Aorta (tissue), 5 donors: ENCODE measurements at regions of chr15 and their contacts with region 1.

Region 1: DNA sequence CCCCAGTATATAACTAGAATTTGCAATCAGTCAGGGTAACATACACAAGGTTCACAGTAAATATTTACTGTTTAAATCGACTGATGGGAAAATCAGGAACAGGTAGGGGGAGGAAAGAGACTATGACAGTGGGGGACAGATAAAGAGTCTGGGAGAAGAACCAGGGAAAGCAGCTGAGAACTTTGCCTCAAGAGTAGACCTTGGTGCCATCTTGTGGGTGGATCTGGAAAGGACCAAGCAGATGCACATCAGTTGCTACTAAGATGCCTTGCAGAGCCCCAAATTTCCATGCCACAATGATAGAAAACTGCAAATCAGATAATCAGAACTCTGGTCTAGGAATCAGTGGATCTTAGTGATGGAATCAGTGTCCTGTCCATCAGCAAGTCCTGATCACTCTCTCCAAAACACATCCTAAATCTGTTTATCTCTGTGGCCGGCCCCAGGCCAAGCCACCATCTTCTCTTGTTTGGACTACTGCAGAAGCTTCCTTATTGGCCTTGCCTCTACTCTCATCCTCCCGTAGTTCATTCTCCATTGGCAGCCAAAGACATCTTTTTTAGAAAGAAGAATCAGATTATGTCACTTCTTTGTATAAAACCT is 62.7 kb downstream of the PDE8A start:
- DNase-seq: no peak
- ATAC-seq: peak; percentile 78
- H3K4me3 ChIP-seq: no peak overlapping the region
- H3K27ac ChIP-seq: no peak overlapping the region
- H3K4me1 ChIP-seq: no peaks in the 10 kb centered on the region
- H3K27me3 ChIP-seq: no peaks in the 10 kb centered on the region

Region 2: GRCh38 chr15:84588053-84588874 is 456.1 kb before region 1 on chr15:
- intact Hi-C with region 1: loop called (anchors 5 to 10 kb)
- DNase-seq: peak; percentile 90 to 95
- ATAC-seq: peak; percentile 99
- H3K4me3 ChIP-seq: peak overlapping the region in 1 of 2 donors; percentile 12
- H3K27ac ChIP-seq: no peak overlapping the region
- H3K4me1 ChIP-seq: no peaks in the 10 kb centered on the region
- H3K27me3 ChIP-seq: no peaks in the 10 kb centered on the region

Region 3: GRCh38 chr15:84600851-84601838 is 443.2 kb before region 1 on chr15 and contains the start of gene ZSCAN2:
- intact Hi-C with region 1: loop called in 1 of 2 experiments (anchors 10 kb)
- DNase-seq: peak; percentile 98
- ATAC-seq: peak; percentile 98
- H3K4me3 ChIP-seq: peak within 1 kb of the TSS; percentile 79 to 91
- H3K27ac ChIP-seq: peak within 1 kb of the TSS in 1 of 2 donors; percentile 18
- H3K4me1 ChIP-seq: no peaks in the 10 kb centered on the region
- H3K27me3 ChIP-seq: no peaks in the 10 kb centered on the region
- total RNA-seq, gene ZSCAN2: 4.1 to 6.7 TPM

Region 4: DNA sequence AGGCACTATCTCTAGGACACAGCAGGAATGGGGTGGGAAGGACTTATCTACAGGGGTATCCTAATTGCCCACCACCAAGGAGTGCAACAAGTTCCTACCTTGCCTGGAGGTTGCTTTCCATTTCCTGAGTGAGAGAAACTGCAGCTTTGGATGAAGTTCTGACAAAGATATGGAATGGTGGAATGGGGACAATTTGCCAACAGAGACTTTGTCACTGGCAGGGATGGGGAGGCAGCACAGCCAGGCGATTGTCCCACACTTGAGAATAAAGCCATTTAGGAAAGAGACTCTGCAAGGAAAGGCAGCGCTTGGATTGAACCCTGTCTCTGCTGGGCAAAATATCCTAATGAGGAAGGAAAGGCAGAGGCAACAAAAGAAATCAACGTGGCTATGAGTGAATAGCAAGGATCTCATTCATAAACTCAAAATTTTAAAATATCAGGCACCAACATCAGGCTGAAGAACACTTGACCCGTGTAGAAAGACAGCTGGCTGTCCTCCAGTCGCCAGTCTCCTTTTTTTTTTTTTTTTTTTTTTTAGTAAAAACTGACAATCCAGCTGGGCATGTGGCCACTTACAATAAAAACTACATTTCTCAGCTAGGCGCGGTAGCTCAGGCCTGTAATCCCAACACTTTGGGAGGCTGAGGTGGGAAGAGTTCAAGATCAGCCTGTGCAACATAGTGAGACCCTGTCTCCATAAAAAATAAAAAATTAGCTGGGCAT is 94.3 kb before region 1 on chr15:
- intact Hi-C with region 1: loop called (anchors 2 to 5 kb)
- DNase-seq: no peak
- ATAC-seq: no peak
- H3K4me3 ChIP-seq: no peak overlapping the region
- H3K27ac ChIP-seq: peak overlapping the region in 1 of 2 donors; percentile 70
- H3K4me1 ChIP-seq: peaks cover 0 to 2% of the 10 kb centered on the region in 2 donors
- H3K27me3 ChIP-seq: no peaks in the 10 kb centered on the region

Region 5: GRCh38 chr15:84955089-84955848 is 89.1 kb before region 1 on chr15:
- intact Hi-C with region 1: loop called (anchors 2 to 5 kb)
- DNase-seq: peak; percentile 81 to 88
- ATAC-seq: peak; percentile 90
- H3K4me3 ChIP-seq: no peak overlapping the region
- H3K27ac ChIP-seq: no peak overlapping the region
- H3K4me1 ChIP-seq: peaks cover 0 to 2% of the 10 kb centered on the region in 2 donors
- H3K27me3 ChIP-seq: peaks cover 0 to 2% of the 10 kb centered on the region in 2 donors

Region 6: DNA sequence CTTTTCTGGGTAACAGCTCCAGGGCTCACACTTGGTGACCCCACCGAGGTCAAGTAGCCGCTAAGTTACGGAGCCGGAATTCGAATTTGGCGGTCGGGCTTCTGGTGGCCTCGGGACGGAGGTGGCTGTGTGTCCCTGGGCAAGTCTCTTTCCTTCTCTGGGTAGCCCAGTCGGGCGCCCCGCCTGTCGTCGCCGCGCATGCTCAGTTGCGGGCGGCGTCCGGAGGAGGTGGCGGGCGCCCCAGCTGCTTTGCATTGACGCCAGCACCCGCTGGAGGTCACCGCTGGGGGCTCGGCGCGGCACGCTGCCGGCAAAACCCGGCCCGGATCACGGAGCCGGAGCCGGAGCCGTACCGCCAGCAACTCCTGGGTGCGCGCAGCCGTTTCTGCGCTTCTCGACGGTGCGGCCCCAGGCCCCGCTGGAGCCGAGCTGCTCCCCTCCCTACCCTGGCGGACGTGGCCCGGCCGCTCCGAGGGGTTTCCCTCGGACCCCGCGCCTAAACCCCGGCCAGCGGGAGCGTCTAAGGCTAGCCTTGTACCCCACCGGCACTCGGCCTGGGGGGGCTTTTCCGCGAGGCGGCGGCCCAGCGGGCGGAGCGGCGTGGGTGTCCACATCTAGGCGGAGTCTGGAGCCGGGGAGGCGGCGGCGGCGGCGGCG is 63.2 kb before region 1 on chr15:
- intact Hi-C with region 1: loop called in 1 of 2 experiments (anchors 10 kb)
- DNase-seq: peak; percentile 97
- ATAC-seq: peak; percentile 96
- H3K4me3 ChIP-seq: peak overlapping the region; percentile 75 to 83
- H3K27ac ChIP-seq: peak overlapping the region; percentile 69 to 74
- H3K4me1 ChIP-seq: no peaks in the 10 kb centered on the region
- H3K27me3 ChIP-seq: no peaks in the 10 kb centered on the region

Region 7: DNA sequence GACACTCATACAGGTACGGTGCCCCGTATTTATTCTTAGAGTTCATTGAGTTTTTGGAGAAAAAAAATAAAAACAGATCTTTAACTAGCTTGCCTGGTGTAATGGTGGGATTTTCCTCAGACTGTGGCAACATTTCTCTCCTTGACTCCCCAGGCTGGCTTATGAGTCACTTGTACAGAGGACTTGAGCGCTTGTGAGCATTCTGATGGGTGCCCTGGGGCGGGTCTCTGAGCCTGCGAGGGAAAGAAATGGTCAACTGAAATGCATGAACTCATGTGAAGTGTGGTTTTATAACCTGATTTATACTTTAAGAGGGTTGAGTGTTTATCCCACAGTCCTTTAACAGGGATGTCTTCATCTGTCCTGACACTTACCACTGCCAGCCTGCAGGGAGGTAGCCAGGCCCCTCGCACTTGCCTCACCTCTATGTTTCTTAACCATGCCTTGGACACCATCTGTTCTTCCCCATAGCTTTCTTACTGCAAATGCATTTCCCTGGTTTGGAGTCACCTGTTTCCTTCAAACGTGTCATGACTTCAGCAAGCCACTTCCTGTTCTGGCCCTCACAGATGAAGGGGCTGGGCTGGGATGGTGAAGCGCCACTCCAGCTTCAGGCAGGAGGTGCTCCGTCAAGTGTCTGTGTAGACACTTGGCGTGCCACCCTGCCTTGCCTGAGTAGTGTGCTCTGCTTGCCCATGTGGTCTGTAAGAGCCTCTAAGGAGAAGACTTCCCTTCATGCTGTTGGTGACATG is 56.0 kb after region 1 on chr15:
- intact Hi-C with region 1: no loop called
- DNase-seq: no peak
- ATAC-seq: no peak
- H3K4me3 ChIP-seq: no peak overlapping the region
- H3K27ac ChIP-seq: no peak overlapping the region
- H3K4me1 ChIP-seq: no peaks in the 10 kb centered on the region
- H3K27me3 ChIP-seq: no peaks in the 10 kb centered on the region